Dorsolateral prefrontal cortex (tissue), 120 donors: ENCODE measurements at regions of chr2 and their contacts with region 1.

Region 1: GRCh38 chr2:176242276-176242675 is 27.0 kb upstream of the MTX2 start:
- DNase-seq: peak in 2 of 10 donors; percentile 22 to 29
- H3K4me3 ChIP-seq: no peak overlapping the region
- H3K27ac ChIP-seq: peak overlapping the region in 24 of 59 donors; percentile 1 to 69 (median 31)
- H3K27me3 ChIP-seq: peaks cover 0 to 12% (median 0%) of the 10 kb centered on the region in 45 donors
- CTCF ChIP-seq: no peak

Region 2: DNA sequence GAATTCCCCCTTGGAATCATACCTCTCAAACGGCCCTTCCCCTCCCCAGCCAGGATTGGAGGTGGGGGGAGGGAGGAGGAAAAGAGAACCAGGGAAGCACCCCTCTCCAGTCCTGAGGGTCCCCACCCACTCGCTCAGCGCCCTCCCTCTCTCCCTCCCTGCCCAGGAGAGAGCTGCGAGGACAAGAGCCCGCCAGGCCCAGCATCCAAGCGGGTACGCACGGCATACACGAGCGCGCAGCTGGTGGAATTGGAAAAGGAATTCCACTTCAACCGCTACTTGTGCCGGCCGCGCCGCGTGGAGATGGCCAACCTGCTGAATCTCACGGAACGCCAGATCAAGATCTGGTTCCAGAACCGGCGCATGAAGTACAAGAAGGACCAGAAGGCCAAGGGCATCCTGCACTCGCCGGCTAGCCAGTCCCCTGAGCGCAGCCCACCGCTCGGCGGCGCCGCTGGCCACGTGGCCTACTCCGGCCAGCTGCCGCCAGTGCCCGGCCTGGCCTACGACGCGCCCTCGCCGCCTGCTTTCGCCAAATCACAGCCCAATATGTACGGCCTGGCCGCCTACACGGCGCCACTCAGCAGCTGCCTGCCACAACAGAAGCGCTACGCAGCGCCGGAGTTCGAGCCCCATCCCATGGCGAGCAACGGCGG is 70.8 kb before region 1 on chr2:
- intact Hi-C with region 1: loop called (anchors 2 to 5 kb)
- DNase-seq: peak in 2 of 10 donors; percentile 21 to 62
- H3K4me3 ChIP-seq: peak overlapping the region in 51 of 59 donors; percentile 5 to 67 (median 40)
- H3K27ac ChIP-seq: peak overlapping the region in 4 of 59 donors; percentile 2 to 95 (median 51)
- H3K27me3 ChIP-seq: peaks cover 16 to 100% (median 99%) of the 10 kb centered on the region in 45 donors
- CTCF ChIP-seq: peak in 33 of 56 donors; percentile 9 to 75 (median 31)

Region 3: DNA sequence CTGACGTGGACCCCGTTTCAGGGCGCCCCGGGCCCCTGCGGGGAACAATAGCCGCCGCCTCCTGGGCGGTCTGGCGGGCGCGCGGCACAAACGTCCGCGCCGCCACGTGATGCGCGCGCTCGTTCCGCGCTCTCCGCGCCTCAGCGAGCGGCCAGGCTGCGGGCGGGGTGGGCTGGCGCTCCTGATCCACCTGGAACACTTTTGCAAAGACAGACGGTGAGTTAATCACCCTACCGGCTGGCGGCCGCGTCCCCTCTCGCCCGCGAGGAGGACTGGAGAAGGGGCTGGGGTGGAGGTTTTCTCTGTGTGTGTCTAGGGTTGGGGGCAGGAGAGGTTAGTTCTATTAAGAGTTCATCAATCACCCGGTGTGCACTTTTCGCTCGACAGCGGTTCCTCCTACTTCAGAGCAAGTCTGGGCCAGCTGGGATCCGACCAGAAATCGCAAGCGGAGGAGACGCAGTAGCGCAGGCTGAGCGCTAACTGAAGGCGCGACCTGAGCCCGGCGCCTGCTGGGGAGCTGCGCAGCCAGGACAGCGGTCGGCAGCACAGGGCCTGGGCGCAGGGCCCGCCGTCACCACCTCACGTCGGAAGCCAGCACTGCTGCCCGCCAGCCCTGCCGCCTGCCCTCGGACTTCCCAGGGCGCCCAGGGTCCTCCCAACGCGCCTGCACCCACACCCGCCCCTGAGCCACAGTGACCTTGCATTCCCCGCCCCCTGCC is 64.1 kb before region 1 on chr2:
- intact Hi-C with region 1: loop called in 1 of 2 experiments (anchors 5 kb)
- DNase-seq: no peak
- H3K4me3 ChIP-seq: peak overlapping the region in 48 of 59 donors; percentile 5 to 63 (median 36)
- H3K27ac ChIP-seq: peak overlapping the region in 12 of 59 donors; percentile 20 to 72 (median 54)
- H3K27me3 ChIP-seq: peaks cover 12 to 95% (median 74%) of the 10 kb centered on the region in 45 donors
- CTCF ChIP-seq: no peak

Region 4: DNA sequence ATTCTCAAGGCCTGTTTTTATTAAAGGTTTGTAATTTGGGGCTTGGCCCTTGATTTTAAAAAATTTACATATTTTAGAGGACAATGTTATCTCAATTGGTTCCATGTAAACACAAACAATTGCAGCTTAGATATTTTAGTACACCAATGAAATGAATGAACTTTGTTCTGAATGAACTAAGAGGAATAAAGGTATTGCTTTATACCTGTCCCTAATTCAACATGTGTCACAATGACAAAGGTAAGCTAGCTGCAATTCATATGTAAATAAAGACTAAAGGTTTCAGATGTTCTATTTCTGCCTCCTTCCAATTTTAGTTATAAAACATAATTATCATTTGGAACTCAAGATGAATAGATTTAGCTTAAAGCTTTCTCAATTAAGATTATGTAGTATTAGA is 42.4 kb before region 1 on chr2:
- intact Hi-C with region 1: loop called in 1 of 2 experiments (anchors 5 kb)
- DNase-seq: no peak
- H3K4me3 ChIP-seq: no peak overlapping the region
- H3K27ac ChIP-seq: no peak overlapping the region
- H3K27me3 ChIP-seq: peaks cover 0 to 43% (median 11%) of the 10 kb centered on the region in 45 donors
- CTCF ChIP-seq: no peak